BJ (cell line): ENCODE measurements at regions of chr11 and their contacts with region 1.

Region 1: DNA sequence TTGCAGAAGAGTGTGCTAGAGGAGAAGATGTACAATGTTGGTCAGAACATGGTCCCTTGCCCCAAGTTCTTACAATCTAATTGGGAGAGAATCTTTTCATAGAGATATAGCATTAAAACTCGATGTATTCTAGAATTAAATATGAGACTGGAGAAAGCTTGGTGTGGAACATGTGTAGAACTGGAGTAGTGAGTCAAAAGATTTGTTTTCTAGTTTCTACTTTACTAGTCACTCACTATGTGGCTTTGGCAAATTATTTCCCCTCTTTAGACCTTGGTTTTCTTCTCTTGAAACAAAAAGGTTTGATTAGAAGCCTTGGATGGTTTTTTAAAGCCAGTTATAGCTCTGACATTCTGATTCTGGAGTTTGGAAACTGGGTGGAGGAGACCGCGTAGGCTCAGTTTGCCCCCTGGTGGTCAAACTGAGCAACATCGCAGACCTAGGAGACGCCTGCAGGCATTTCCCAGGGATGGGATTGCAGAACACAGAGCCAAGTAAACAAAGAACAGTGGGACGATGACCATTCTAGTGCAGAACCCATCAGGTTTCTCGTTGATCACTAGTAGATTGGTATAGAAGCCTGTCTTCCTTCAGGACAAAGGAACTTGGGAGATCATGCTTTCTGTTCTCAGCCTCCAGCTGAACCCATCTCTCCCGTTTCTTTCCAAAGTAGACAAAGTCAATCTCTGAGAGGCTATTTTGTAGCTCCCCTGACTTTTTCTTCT is 8.5 kb upstream of the CHRDL2 start:
- DNase-seq: no peak
- H3K4me3 ChIP-seq: no peak overlapping the region
- H3K27me3 ChIP-seq: peaks cover 9% of the 10 kb centered on the region
- CTCF ChIP-seq: peak; percentile 91

Region 2: GRCh38 chr11:74550991-74551753 is 188.5 kb before region 1 on chr11:
- CTCF ChIA-PET with region 1: no interaction called
- POLR2A ChIA-PET with region 1: no interaction called
- DNase-seq: no peak
- H3K4me3 ChIP-seq: no peak overlapping the region
- H3K27me3 ChIP-seq: peaks cover 8% of the 10 kb centered on the region
- CTCF ChIP-seq: no peak

Region 3: GRCh38 chr11:74611369-74611861 is 128.3 kb before region 1 on chr11:
- CTCF ChIA-PET with region 1: interaction called, 24 read pairs
- POLR2A ChIA-PET with region 1: no interaction called
- DNase-seq: peak; percentile 86
- H3K4me3 ChIP-seq: no peak overlapping the region
- H3K27me3 ChIP-seq: no peaks in the 10 kb centered on the region
- CTCF ChIP-seq: peak; percentile 54

Region 4: DNA sequence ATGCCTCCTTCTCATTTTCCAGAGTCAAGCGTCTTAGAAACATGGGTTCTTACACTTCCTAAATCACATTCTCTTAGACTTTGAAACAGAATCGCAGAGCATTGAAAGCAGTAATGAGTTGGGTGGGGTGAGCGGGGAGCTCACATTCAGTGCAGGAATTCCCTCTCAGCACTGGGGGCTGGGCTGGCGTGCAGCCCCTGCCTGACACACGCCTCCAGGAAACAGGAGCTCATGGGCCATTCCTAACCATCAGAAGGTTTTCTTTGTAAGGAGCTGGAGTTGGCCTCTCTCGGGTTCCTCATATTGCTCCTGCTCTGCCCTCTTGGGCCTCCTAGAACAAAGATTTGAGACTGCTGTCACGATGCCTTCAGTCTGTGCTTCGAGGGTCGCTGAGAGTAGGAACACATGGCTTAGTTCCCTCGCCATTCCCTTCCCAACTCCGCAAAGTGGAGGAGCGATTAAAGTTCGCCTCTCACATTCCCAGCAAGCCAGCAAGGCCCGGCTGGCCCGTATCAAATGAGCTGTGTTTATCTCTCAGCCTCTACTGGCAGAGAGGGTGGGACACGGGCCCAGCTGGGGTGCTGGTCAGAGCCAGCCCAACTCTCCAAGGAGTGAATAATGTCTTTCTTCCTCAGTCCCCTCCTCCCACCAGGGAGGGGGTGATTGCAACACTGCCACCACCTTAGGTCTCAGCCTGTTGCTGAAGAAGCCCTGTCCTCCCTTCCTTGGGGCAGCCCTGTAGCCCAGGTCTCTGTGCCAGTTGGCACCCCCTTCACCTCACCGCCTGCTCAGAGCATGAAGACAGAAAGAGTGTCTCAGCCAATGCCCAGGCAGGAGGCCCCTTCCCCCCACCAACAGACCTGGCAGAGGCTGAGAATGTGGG is 18.9 kb before region 1 on chr11:
- CTCF ChIA-PET with region 1: interaction called, 50 read pairs
- POLR2A ChIA-PET with region 1: no interaction called
- DNase-seq: no peak
- H3K4me3 ChIP-seq: no peak overlapping the region
- H3K27me3 ChIP-seq: peaks cover 15% of the 10 kb centered on the region
- CTCF ChIP-seq: no peak